ENCODE measurements at regions of chr17 and their contacts with region 1.

Region 1: GRCh38 chr17:17890773-17891759 is 54.3 kb upstream of the SREBF1 start:
- DNase-seq: peak in 1 of 5 donors; percentile 65
- H3K4me3 ChIP-seq: no peak overlapping the region
- H3K27ac ChIP-seq: no peak overlapping the region
- H3K4me1 ChIP-seq: no peaks in the 10 kb centered on the region
- H3K27me3 ChIP-seq: no peaks in the 10 kb centered on the region
- CTCF ChIP-seq: peak in 2 of 3 donors; percentile 42
- EP300 ChIP-seq: no peak
- POLR2A ChIP-seq: no peak

Region 2: DNA sequence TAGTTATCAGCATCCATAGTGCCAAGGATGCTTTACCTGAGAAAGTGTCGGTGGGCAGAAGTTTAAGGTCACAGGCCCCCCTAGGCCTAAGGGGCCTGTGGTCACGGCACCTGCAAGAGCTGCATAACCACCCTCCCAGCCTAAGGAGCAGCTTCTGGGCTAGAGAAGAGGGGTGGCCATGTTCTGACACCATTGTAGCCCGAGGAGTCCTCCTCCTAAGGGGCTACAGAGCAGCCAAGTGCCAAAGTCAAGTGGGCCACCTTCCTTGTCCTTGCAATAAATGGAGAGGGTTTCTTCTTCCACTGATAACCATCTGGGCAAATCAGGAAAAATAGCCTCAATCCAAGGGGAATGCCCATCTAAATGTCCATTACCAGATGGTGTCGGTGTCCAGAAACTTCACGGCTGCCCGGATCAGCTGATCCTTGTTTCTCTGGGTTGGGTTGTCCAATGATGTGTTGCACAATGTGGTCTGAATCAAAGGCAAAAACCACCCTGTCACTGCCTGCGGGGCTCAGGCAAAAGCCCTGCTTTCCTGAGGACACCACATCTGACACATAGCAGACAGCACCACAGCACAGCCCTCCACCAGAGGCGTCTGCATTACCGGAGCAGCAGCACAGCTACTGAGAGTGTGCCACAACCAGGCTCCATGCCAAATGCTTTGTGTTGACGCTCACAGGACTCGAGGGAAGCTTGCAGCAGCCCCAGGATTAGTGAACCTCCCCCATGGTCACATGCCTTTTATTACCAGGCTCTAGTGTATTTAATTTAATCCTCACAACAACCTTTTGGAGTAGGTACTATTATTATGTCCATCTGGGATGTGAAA is 135.1 kb after region 1 on chr17:
- intact Hi-C with region 1: loop called in 3 of 4 experiments (anchors 10 kb)
- DNase-seq: no peak
- H3K4me3 ChIP-seq: no peak overlapping the region
- H3K27ac ChIP-seq: no peak overlapping the region
- H3K4me1 ChIP-seq: no peaks in the 10 kb centered on the region
- H3K27me3 ChIP-seq: no peaks in the 10 kb centered on the region
- CTCF ChIP-seq: no peak
- EP300 ChIP-seq: no peak
- POLR2A ChIP-seq: no peak

Region 3: GRCh38 chr17:18038861-18039534 is 147.9 kb after region 1 on chr17 and contains the starts of genes ATPAF2 and GID4:
- intact Hi-C with region 1: loop called in 2 of 4 experiments (anchors 10 kb)
- DNase-seq: peak; percentile 99 to 100 (median 100)
- H3K4me3 ChIP-seq: peak within 1 kb of the TSS; percentile 91
- H3K27ac ChIP-seq: peak within 1 kb of the TSS; percentile 61 to 68
- H3K4me1 ChIP-seq: peaks cover 7% of the 10 kb centered on the region
- H3K27me3 ChIP-seq: no peaks in the 10 kb centered on the region
- CTCF ChIP-seq: peak in 1 of 3 donors; percentile 24
- EP300 ChIP-seq: no peak
- POLR2A ChIP-seq: peak; percentile 18
- total RNA-seq, gene ATPAF2: 5.5 to 18.6 (median 15.5) TPM
- total RNA-seq, gene GID4: 6.0 to 13.2 (median 11.2) TPM

Measured in ovary (tissue), 10 donors.